ENCODE measurements at regions of chr5 and their contacts with region 1.

Region 1: DNA sequence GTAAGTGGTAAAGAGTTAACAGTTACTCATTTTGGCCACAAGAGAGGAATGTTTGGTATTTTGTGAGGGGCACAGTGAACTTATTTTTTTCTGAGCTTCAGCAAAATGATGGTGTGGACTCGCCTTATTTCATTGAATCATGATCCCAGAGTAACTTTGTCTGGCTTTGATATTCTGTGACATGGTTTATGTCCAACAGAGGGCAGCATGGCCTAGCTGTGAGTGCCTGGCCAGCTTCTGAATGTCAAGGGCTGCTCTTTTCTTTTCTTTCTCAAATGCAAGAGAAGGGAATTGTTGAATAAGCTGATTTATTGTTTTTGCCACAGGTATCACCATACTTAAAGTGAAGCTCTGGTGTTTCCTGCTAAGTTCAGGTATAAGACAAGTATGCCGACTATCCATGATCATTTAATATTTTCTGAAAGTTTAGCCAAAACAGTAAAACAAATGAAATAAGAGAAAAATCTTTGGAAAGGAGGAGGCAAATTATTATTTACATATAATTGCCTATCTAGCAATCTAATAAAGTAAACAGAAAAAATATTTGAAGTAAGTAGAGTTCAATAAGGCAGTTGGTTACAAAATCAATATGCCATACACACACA is 31.7 kb downstream of the MRPL22 start:
- DNase-seq: no peak
- ATAC-seq: peak; percentile 57; the same call in 2 of the 3 replicates
- H3K4me3 ChIP-seq: no peak overlapping the region
- H3K27ac ChIP-seq: no peak overlapping the region
- H3K4me1 ChIP-seq: no peaks in the 10 kb centered on the region; the same call in 1 of the 2 replicates
- H3K27me3 ChIP-seq: no peaks in the 10 kb centered on the region
- CTCF ChIP-seq: peak; percentile 38 to 54 (median 50); a peak in 5 of 6 replicates
- EP300 ChIP-seq: no peak
- POLR2A ChIP-seq: no peak
- RAD21 ChIP-seq: peak; percentile 64

Region 2: DNA sequence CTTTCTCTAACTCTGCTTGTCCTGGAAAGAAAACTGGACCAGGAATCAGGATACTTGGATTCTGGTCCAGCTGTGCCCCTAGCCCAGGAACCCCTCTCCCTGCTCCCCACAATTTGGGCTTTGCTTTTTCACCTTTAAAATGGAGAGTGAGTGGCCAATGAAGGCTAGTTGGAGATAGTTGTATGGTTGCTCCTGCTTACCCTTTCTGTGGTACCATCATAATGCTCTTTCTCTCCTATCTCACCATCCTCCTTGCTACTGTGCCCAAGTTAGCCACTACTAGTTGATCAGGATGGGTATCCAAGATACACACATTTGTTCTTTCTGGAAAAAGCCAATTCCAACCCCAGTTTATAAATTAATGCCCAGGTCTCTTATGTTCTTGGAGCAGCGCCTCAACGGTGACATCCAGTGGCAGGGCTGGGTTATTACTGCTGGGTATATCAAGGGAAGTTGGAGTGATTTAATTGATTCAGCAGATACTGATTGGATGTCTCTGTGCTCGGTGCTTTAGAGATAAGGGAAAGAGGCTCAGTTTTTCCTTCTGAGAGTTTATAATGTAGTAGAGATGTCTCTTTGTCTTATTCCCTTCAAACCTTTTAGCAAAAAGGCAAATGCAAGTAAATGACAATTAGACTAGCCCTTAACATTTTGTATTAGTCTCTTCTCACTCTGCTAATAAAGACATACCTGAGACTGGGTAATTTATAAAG is 160.8 kb before region 1 on chr5:
- CTCF ChIA-PET with region 1: no interaction called
- POLR2A ChIA-PET with region 1: no interaction called
- RAD21 ChIA-PET with region 1: no interaction called
- SMC1A ChIA-PET with region 1: no interaction called
- in situ Hi-C with region 1: no loop called
- intact Hi-C with region 1: no loop called
- DNase-seq: peak; percentile 9
- ATAC-seq: peak; percentile 90
- H3K4me3 ChIP-seq: no peak overlapping the region
- H3K27ac ChIP-seq: no peak overlapping the region
- H3K4me1 ChIP-seq: no peaks in the 10 kb centered on the region
- H3K27me3 ChIP-seq: no peaks in the 10 kb centered on the region
- CTCF ChIP-seq: peak; percentile 74 to 88 (median 84)
- EP300 ChIP-seq: no peak
- POLR2A ChIP-seq: no peak
- RAD21 ChIP-seq: peak; percentile 91

Region 3: DNA sequence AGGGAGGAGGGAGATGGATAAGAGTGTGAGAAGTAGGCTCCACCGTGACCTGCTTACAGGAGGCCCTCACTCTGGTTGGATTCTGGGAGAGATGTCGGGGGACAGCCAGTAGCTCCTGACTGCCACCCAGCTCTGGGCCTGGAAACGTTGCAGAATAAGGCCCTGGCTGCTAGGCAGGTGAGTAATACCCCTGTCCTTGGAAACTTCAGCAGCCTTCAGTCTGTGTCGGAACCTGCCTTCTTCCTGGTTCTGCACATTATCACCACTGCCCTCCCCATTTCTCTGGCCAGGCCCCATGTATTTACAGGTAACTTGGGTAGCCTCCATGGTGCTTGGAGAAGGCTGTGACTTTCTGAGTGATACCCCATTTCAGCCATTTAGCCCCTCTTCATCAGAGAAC is 149.0 kb before region 1 on chr5:
- CTCF ChIA-PET with region 1: no interaction called
- POLR2A ChIA-PET with region 1: no interaction called
- RAD21 ChIA-PET with region 1: no interaction called
- SMC1A ChIA-PET with region 1: no interaction called
- in situ Hi-C with region 1: no loop called
- intact Hi-C with region 1: no loop called
- DNase-seq: no peak
- ATAC-seq: no peak
- H3K4me3 ChIP-seq: no peak overlapping the region
- H3K27ac ChIP-seq: no peak overlapping the region
- H3K4me1 ChIP-seq: no peaks in the 10 kb centered on the region
- H3K27me3 ChIP-seq: no peaks in the 10 kb centered on the region
- CTCF ChIP-seq: no peak
- EP300 ChIP-seq: no peak
- POLR2A ChIP-seq: no peak
- RAD21 ChIP-seq: no peak

Region 4: DNA sequence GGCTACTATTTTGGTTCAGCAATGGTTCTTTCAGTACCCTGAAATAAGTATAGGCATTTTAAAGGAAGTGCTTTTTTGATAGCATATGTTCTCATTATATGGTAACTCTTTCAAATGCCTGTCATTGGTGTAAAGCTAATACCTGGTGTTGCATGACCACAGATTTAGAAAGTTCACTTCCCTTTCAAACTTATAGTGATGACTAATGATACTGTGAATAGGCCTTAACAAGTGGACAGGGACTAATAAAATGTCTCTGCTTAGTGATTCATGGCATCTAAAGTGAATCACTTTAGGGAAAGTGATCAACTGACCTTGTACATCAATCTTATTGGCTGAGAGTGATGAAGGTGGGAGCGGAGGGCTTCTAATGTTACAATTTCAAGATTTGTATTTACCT is 10.1 kb before region 1 on chr5:
- CTCF ChIA-PET with region 1: interaction called, 13 read pairs
- POLR2A ChIA-PET with region 1: no interaction called
- RAD21 ChIA-PET with region 1: no interaction called
- SMC1A ChIA-PET with region 1: interaction called, 4 read pairs
- in situ Hi-C with region 1: no loop called
- intact Hi-C with region 1: no loop called
- DNase-seq: no peak
- ATAC-seq: peak; percentile 94
- H3K4me3 ChIP-seq: no peak overlapping the region
- H3K27ac ChIP-seq: no peak overlapping the region
- H3K4me1 ChIP-seq: no peaks in the 10 kb centered on the region
- H3K27me3 ChIP-seq: no peaks in the 10 kb centered on the region
- CTCF ChIP-seq: no peak
- EP300 ChIP-seq: no peak
- POLR2A ChIP-seq: no peak
- RAD21 ChIP-seq: no peak

Region 5: DNA sequence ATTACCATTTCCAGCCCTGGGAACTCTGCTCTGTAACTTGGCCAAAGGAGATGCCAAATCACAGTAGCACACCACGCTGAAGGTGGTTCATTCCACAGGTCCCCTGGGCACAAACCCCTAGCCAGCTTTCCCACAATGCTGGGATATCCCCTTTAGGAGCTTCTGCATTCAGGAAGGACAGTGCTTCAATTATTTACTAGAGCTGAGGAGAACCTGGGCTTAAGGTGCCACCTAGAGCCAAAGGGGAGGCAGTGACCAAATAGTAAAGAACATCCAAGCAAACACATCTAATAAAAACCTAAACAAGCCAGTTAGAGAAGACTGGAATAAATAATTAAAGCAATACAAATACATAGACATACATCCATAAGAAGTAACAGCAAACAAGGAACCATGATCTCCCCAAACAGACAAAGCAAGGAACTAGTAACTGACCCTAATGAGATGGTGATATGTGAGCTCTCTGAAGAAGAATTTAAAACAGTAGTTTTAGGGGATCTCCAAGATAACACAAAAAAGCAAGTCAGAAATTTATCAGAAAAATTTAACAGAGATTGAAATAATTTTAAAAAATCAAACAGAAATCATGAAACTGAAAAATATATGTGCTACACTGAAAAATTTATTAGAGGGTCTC is 55.5 kb after region 1 on chr5:
- CTCF ChIA-PET with region 1: interaction called, 7 read pairs
- POLR2A ChIA-PET with region 1: no interaction called
- RAD21 ChIA-PET with region 1: interaction called, 8 read pairs
- SMC1A ChIA-PET with region 1: interaction called, 6 read pairs
- in situ Hi-C with region 1: no loop called
- intact Hi-C with region 1: loop called (anchors 1 kb)
- DNase-seq: no peak
- ATAC-seq: peak; percentile 76
- H3K4me3 ChIP-seq: no peak overlapping the region
- H3K27ac ChIP-seq: no peak overlapping the region
- H3K4me1 ChIP-seq: no peaks in the 10 kb centered on the region
- H3K27me3 ChIP-seq: no peaks in the 10 kb centered on the region
- CTCF ChIP-seq: peak; percentile 34 to 46 (median 38); a peak in 5 of 6 replicates
- EP300 ChIP-seq: no peak
- POLR2A ChIP-seq: no peak
- RAD21 ChIP-seq: peak; percentile 63

Region 6: GRCh38 chr5:155147222-155147621 is 174.6 kb after region 1 on chr5:
- CTCF ChIA-PET with region 1: no interaction called
- POLR2A ChIA-PET with region 1: no interaction called
- RAD21 ChIA-PET with region 1: no interaction called
- SMC1A ChIA-PET with region 1: no interaction called
- in situ Hi-C with region 1: no loop called
- intact Hi-C with region 1: loop called (anchors 10 kb)
- DNase-seq: no peak
- ATAC-seq: no peak
- H3K4me3 ChIP-seq: no peak overlapping the region
- H3K27ac ChIP-seq: no peak overlapping the region
- H3K4me1 ChIP-seq: no peaks in the 10 kb centered on the region
- H3K27me3 ChIP-seq: no peaks in the 10 kb centered on the region; a peak in 2 of 4 replicates
- CTCF ChIP-seq: peak; percentile 8 to 17 (median 11); a peak in 2 of 6 replicates
- EP300 ChIP-seq: no peak
- POLR2A ChIP-seq: no peak
- RAD21 ChIP-seq: no peak

Measured in GM12878 (cell line).